Activated CD4-positive, alpha-beta memory T cell treated with anti-CD3 and anti-CD28 coated beads, Interleukin-2, amount 10 ng/mL, durations not matched to agents 7 days and 5 days (primary cell): ENCODE measurements at regions of chr22 and their contacts with region 1.

Region 1: GRCh38 chr22:25057013-25057881 is 104.7 kb downstream of the KIAA1671 start:
- DNase-seq: peak; percentile 82
- H3K4me3 Mint-ChIP-seq: no peak overlapping the region
- H3K27ac Mint-ChIP-seq: no peak overlapping the region
- H3K4me1 Mint-ChIP-seq: peaks cover 57% of the 10 kb centered on the region
- H3K27me3 Mint-ChIP-seq: no peaks in the 10 kb centered on the region

Region 2: GRCh38 chr22:24834845-24835570 is 222.2 kb before region 1 on chr22:
- CTCF ChIA-PET with region 1: no interaction called
- POLR2A ChIA-PET with region 1: no interaction called
- DNase-seq: no peak
- H3K4me3 Mint-ChIP-seq: no peak overlapping the region
- H3K27ac Mint-ChIP-seq: no peak overlapping the region
- H3K4me1 Mint-ChIP-seq: no peaks in the 10 kb centered on the region
- H3K27me3 Mint-ChIP-seq: peaks cover 2% of the 10 kb centered on the region

Region 3: GRCh38 chr22:24938741-24939341 is 118.4 kb before region 1 on chr22:
- CTCF ChIA-PET with region 1: interaction called, 46 read pairs
- POLR2A ChIA-PET with region 1: no interaction called
- DNase-seq: peak; percentile 35
- H3K4me3 Mint-ChIP-seq: no peak overlapping the region
- H3K27ac Mint-ChIP-seq: no peak overlapping the region
- H3K4me1 Mint-ChIP-seq: no peaks in the 10 kb centered on the region
- H3K27me3 Mint-ChIP-seq: peaks cover 12% of the 10 kb centered on the region

Region 4: GRCh38 chr22:24951942-24952836 is 105.1 kb before region 1 on chr22 and contains the start of gene KIAA1671:
- CTCF ChIA-PET with region 1: interaction called, 95 read pairs
- POLR2A ChIA-PET with region 1: interaction called, 5 read pairs
- DNase-seq: peak; percentile 92
- H3K4me3 Mint-ChIP-seq: peak within 1 kb of the TSS; percentile 90
- H3K27ac Mint-ChIP-seq: peak within 1 kb of the TSS; percentile 75
- H3K4me1 Mint-ChIP-seq: peaks cover 57% of the 10 kb centered on the region
- H3K27me3 Mint-ChIP-seq: peaks cover 68% of the 10 kb centered on the region
- total RNA-seq, gene KIAA1671: 35.0 to 35.5 TPM

Region 5: GRCh38 chr22:25067851-25068421 is 10.7 kb after region 1 on chr22:
- CTCF ChIA-PET with region 1: interaction called, 12 read pairs
- POLR2A ChIA-PET with region 1: interaction called, 9 read pairs
- DNase-seq: peak; percentile 91
- H3K4me3 Mint-ChIP-seq: peak overlapping the region; percentile 79
- H3K27ac Mint-ChIP-seq: peak overlapping the region; percentile 99
- H3K4me1 Mint-ChIP-seq: peaks cover 73% of the 10 kb centered on the region
- H3K27me3 Mint-ChIP-seq: no peaks in the 10 kb centered on the region

Region 6: GRCh38 chr22:25076336-25076735 is 19.1 kb after region 1 on chr22:
- CTCF ChIA-PET with region 1: interaction called, 5 read pairs
- POLR2A ChIA-PET with region 1: interaction called, 10 read pairs
- DNase-seq: peak; percentile 26
- H3K4me3 Mint-ChIP-seq: peak overlapping the region; percentile 36
- H3K27ac Mint-ChIP-seq: peak overlapping the region; percentile 67
- H3K4me1 Mint-ChIP-seq: peaks cover 52% of the 10 kb centered on the region
- H3K27me3 Mint-ChIP-seq: no peaks in the 10 kb centered on the region